HEK293T (cell line): ENCODE measurements at regions of chr5 and their contacts with region 1.

Region 1: GRCh38 chr5:160342403-160342941 is 28.0 kb downstream of the C1QTNF2 start:
- DNase-seq: no peak

Region 2: DNA sequence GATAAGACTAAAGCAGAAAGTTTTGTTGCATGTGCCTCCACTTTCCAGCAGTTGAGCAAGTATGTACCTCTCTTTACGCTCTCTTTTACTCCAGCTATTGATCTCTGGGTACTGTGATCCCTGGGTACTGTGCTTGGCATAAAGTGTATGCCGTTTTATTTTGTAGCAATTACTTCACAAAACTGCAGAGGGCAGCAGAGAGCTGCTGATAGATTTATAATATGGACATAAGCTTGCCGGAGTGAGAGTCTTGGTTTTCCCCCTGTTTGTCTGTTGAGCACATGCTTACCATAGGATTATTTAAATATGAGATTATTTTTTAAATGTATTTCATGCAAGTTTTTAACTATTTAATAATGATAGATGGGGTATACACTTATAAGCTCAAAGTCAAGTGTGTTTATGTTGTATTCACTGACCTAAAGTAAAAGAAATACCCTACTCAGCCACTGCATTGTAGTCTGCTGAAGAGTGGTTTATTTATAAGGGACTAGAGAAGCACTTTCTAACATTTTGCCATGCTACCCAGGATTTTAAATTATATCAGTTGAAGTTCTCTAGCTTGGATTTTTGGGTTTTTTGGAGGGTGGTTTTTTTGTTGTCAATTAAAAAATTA is 320.5 kb before region 1 on chr5:
- CTCF ChIA-PET with region 1: interaction called, 15 read pairs
- POLR2A ChIA-PET with region 1: interaction called, 3 read pairs
- DNase-seq: peak; percentile 68

Region 3: DNA sequence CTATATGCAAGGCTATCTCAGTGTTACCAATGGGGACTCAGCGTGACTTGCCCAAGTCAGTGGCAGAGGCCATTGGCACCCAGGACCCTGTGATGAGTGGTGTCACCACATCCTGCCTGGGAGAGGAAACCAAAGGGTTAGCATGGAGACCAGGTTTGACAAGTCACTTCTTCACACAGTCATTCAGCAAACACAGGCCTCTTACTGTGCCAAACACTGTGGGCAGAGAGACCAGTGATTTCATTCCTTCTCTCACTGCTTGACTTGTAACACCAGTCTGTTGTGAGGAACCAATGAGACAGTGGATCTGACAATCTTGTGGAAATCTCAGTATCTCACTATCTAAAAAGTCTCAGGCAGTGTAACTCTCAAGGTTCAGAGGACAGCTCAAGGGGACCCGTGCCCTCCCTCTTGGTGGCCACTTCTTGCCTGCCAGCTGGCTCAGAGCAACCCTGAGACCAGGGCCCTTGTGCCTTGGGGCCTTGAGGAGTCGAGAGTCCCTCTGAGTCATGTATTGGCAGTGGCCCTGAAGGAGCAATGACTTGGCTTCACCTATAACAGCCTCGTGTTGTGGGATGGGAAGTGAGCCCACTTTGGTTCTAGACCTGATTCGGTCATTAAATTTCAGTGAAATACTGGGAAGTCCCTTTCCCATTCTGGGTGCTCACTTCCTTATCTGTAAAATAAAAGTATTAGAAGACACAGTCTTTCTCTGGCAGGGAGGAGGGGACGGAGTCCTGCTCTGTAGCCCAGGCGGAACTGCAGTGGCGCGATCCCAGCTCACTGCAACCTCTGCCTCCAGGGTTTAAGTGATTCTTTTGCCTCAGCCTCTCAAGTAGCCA is 111.6 kb before region 1 on chr5:
- CTCF ChIA-PET with region 1: no interaction called
- POLR2A ChIA-PET with region 1: no interaction called
- DNase-seq: no peak